Transverse colon (tissue), 4 donors: ENCODE measurements at regions of chr15 and their contacts with region 1.

Region 1: GRCh38 chr15:64209680-64210334 is 47.0 kb upstream of the PPIB start:
- DNase-seq: no peak
- H3K4me3 ChIP-seq: no peak overlapping the region
- H3K27ac ChIP-seq: no peak overlapping the region
- H3K4me1 ChIP-seq: no peaks in the 10 kb centered on the region
- H3K27me3 ChIP-seq: no peaks in the 10 kb centered on the region
- CTCF ChIP-seq: peak; percentile 44 to 67 (median 46)
- EP300 ChIP-seq: no peak
- POLR2A ChIP-seq: no peak

Region 2: GRCh38 chr15:64355944-64356709 is 146.3 kb after region 1 on chr15 and contains the start of gene CSNK1G1:
- in situ Hi-C with region 1: loop called in 3 of 4 experiments (anchors 10 to 25 kb)
- intact Hi-C with region 1: no loop called
- DNase-seq: peak; percentile 93
- H3K4me3 ChIP-seq: peak within 1 kb of the TSS; percentile 76 to 88 (median 82)
- H3K27ac ChIP-seq: peak within 1 kb of the TSS; percentile 73 to 89 (median 81)
- H3K4me1 ChIP-seq: peaks cover 5 to 18% (median 15%) of the 10 kb centered on the region in 4 donors
- H3K27me3 ChIP-seq: no peaks in the 10 kb centered on the region
- CTCF ChIP-seq: peak; percentile 19 to 65 (median 41)
- EP300 ChIP-seq: no peak
- POLR2A ChIP-seq: peak; percentile 43
- total RNA-seq, gene CSNK1G1: 6.2 to 34.4 (median 19.7) TPM

Region 3: DNA sequence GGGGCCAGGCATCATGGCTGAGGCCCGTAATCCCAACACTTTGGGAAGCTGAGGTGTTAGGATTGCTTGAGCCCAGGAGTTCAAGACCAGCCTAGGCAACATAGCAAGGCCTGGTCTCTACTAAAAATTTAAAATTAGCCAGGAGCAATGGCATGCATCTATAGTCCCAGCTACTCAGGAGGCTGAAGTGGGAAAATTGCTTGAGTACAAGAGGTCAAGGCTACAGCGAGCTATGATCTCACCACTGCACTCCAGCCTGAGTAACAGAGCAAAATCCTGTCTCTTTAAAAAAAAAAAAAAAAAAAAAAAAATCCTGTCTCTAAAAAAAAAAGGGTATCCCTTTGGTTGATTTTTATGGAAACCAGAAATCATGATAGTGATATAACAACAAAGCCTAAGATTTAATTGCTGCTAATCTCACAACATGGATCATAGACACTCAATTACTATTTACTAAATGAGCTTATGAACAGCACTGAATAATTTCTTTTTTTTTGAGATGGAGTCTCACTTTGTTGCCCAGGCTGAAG is 159.3 kb after region 1 on chr15:
- in situ Hi-C with region 1: loop called in 2 of 4 experiments (anchors 10 to 25 kb)
- intact Hi-C with region 1: no loop called
- DNase-seq: no peak
- H3K4me3 ChIP-seq: no peak overlapping the region
- H3K27ac ChIP-seq: no peak overlapping the region
- H3K4me1 ChIP-seq: no peaks in the 10 kb centered on the region
- H3K27me3 ChIP-seq: no peaks in the 10 kb centered on the region
- CTCF ChIP-seq: no peak
- EP300 ChIP-seq: no peak
- POLR2A ChIP-seq: no peak

Region 4: GRCh38 chr15:64651573-64652260 is 441.9 kb after region 1 on chr15:
- in situ Hi-C with region 1: loop called in 2 of 4 experiments (anchors 25 kb)
- intact Hi-C with region 1: no loop called
- DNase-seq: no peak
- H3K4me3 ChIP-seq: no peak overlapping the region
- H3K27ac ChIP-seq: peak overlapping the region; percentile 7 to 39 (median 20)
- H3K4me1 ChIP-seq: peaks cover 0 to 41% (median 8%) of the 10 kb centered on the region in 4 donors
- H3K27me3 ChIP-seq: no peaks in the 10 kb centered on the region
- CTCF ChIP-seq: no peak
- EP300 ChIP-seq: no peak
- POLR2A ChIP-seq: no peak

Region 5: DNA sequence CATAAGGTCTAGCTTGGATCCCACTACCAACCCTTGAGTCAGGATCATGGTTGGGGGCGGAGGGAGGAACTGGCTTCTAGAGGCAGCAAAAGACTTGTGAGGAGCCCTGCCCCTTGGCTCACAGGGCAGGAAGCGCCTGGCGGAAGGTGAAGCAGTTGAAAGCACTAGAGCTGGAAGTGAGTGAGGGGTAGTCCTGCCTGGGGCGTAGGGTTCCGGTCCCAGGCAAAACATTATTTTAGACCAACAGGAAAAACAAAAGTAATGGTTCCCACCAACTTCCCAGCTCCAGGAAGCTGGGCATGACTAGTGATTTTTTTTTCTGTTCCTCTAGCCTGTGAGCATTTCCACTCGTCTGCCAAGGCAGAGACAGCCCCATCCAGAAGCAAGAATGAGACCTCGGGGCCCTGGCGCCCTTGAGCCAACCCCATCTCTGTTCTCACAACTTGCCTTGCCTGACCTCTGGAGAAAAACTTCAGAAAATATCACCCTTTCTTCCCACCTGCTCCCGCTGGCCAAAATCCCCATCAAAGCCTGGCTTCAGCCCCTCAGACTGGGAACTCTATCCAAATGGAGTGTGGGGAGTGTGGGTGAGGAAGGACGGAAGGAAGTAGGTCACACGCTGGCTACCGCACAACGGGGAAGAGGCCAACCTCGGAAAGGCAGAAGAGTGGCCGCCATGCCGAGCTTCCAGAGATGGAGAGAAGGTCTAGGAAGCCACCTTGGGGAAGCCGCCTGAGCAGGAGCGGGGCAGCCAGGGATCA is 508.1 kb after region 1 on chr15:
- in situ Hi-C with region 1: no loop called
- intact Hi-C with region 1: loop called (anchors 5 kb)
- DNase-seq: no peak
- H3K4me3 ChIP-seq: no peak overlapping the region
- H3K27ac ChIP-seq: peak overlapping the region; percentile 5 to 67 (median 50)
- H3K4me1 ChIP-seq: peaks cover 0 to 5% (median 0%) of the 10 kb centered on the region in 4 donors
- H3K27me3 ChIP-seq: no peaks in the 10 kb centered on the region
- CTCF ChIP-seq: no peak
- EP300 ChIP-seq: no peak
- POLR2A ChIP-seq: no peak

Region 6: GRCh38 chr15:65512807-65513416 is 1303.1 kb after region 1 on chr15:
- in situ Hi-C with region 1: no loop called
- intact Hi-C with region 1: no loop called
- DNase-seq: no peak
- H3K4me3 ChIP-seq: peak overlapping the region in 1 of 4 donors; percentile 8
- H3K27ac ChIP-seq: peak overlapping the region; percentile 31 to 68 (median 46)
- H3K4me1 ChIP-seq: peaks cover 12 to 33% (median 21%) of the 10 kb centered on the region in 4 donors
- H3K27me3 ChIP-seq: no peaks in the 10 kb centered on the region
- CTCF ChIP-seq: no peak
- EP300 ChIP-seq: no peak
- POLR2A ChIP-seq: no peak